GM12878 (cell line): ENCODE measurements at regions of chr7 and their contacts with region 1.

Region 1: DNA sequence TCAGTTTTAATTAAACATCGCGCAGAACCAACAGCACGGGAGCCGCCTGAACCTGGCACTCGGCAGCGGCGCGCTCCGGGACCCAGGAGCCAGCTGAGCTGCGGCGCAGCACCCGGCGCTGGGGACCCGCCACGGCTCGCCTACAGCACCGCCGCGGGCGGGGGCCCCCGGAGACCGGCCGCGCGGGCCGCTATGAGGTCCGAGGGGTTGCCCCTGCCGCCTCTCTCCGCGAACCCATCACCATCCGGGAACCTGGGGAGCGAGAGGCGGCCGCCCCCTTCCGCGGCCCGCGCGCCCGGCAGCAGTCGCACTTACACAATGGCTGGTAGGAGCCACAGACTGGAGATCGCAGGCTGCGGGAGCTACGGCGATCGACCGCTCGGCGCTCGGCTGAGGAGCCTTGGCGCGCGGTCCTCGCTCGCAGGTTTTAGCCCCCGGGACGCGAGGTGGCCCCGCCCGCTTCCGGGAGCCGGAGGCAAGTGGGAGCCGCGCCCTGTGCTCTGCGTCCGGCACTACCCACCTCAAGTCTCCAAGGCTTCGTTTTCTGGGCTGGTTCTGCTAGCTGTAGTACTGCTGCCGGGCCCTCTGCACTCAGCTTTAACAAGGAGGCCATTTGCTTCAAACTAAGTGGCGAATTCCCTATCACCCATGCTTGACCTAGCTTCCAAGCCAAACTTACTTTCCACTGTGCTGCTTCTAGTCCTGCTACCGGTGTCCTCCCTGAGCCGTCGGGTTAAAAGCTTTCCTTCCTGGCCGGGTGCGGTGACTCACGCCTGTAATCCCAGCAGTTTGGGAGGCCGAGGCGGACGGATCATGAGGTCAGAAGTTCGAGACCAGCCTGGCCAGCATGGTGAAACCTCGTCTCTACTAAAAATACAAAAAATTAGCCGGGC is at the start of gene TPK1:
- DNase-seq: peak; percentile 74
- ATAC-seq: peak; percentile 88
- H3K4me3 ChIP-seq: peak within 1 kb of the TSS; percentile 94
- H3K27ac ChIP-seq: peak within 1 kb of the TSS; percentile 86
- H3K4me1 ChIP-seq: no peaks in the 10 kb centered on the region; the same call in 1 of the 2 replicates
- H3K27me3 ChIP-seq: no peaks in the 10 kb centered on the region
- CTCF ChIP-seq: no peak
- EP300 ChIP-seq: 0 out of 4 replicates have a peak, but pooled peaks of 1 of the 2 experiments have one; percentile 23
- POLR2A ChIP-seq: peak; percentile 93
- RAD21 ChIP-seq: no peak
- polyA plus RNA-seq, gene TPK1: 8.0 to 11.3 TPM

Region 2: DNA sequence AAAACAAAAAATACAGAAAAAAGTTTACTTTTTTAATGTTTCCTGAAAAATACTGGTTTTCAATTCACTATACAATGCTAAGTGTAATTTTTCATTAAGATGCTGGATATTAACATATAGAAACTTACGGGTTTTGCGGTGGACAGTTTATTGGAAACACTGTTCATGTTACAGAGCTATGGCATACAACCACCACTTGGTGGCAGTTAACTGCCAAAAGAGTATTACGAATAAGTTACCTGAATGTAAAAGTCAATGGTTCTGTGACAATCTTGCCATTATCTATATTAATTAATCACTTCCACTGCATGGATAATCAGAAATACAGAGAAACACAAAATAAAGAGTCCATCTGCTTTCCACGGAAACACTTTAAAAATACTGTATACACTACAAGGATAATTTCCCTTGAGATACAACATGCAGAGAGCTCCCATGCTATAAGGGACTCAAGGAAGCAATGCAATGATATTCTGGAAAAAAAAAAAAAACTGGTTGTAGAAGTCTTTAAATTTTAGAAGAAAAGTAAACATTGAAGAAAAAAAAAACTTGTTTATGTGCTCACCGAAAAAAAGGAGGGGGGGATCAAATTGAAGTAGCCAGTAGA is 97.1 kb before region 1 on chr7:
- CTCF ChIA-PET with region 1: interaction called, 20 read pairs
- POLR2A ChIA-PET with region 1: interaction called, 6 read pairs
- RAD21 ChIA-PET with region 1: interaction called, 3 read pairs
- SMC1A ChIA-PET with region 1: interaction called, 5 read pairs
- in situ Hi-C with region 1: no loop called
- intact Hi-C with region 1: loop called (anchors 5 kb)
- DNase-seq: no peak
- ATAC-seq: peak; percentile 91
- H3K4me3 ChIP-seq: no peak overlapping the region
- H3K27ac ChIP-seq: no peak overlapping the region
- H3K4me1 ChIP-seq: no peaks in the 10 kb centered on the region
- H3K27me3 ChIP-seq: no peaks in the 10 kb centered on the region
- CTCF ChIP-seq: peak; percentile 66 to 71 (median 70)
- EP300 ChIP-seq: no peak
- POLR2A ChIP-seq: no peak
- RAD21 ChIP-seq: peak; percentile 66

Region 3: GRCh38 chr7:144786522-144786921 is 49.4 kb before region 1 on chr7:
- CTCF ChIA-PET with region 1: interaction called, 18 read pairs
- POLR2A ChIA-PET with region 1: no interaction called
- RAD21 ChIA-PET with region 1: interaction called, 14 read pairs
- SMC1A ChIA-PET with region 1: interaction called, 4 read pairs
- in situ Hi-C with region 1: no loop called
- intact Hi-C with region 1: no loop called
- DNase-seq: no peak
- ATAC-seq: peak; percentile 79
- H3K4me3 ChIP-seq: no peak overlapping the region
- H3K27ac ChIP-seq: no peak overlapping the region
- H3K4me1 ChIP-seq: no peaks in the 10 kb centered on the region
- H3K27me3 ChIP-seq: no peaks in the 10 kb centered on the region
- CTCF ChIP-seq: peak; percentile 28 to 42 (median 39); a peak in 5 of 6 replicates
- EP300 ChIP-seq: no peak
- POLR2A ChIP-seq: no peak
- RAD21 ChIP-seq: peak; percentile 49

Region 4: DNA sequence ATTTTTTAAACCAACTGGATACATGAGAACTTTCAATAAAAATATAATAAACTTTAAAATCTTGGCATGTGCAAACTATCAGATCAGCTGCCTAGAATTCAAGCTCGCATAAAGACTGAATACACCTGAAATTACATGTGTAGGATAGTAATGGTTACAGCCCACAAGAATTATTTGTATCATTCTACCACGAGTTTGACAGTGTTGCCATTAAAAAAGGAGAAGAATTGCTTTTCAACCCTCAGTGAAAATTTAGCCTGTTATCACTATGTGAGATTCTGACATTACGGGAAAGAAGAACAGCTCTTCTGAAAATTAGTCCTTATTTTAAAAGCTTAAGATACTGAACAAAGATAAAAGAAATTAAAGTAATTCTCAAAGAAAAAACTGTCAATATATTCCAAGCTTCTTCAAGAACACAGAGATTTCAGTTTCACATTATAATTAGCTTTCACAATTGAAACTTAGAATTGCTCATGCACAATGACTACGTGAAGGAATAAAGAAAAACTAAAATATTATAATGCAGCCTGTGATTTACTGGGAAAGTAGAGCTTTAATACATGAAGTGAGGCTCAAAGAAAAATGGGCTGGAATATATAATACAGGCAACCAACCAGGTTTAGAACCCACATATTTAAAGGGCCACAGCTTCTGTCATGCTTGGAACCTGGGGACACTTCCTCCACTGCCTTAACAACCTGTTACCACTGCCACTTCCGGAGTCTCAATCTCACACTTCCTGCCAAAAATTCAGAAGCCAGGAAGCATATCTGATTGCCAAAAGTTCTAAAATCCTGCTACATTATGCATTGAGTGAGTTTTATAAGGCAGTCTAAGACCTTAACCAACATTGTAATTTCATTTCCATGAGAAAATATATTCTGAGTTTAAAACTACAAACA is 23.3 kb before region 1 on chr7:
- CTCF ChIA-PET with region 1: interaction called, 8 read pairs
- POLR2A ChIA-PET with region 1: interaction called, 16 read pairs
- RAD21 ChIA-PET with region 1: interaction called, 14 read pairs
- SMC1A ChIA-PET with region 1: interaction called, 9 read pairs
- in situ Hi-C with region 1: no loop called
- intact Hi-C with region 1: no loop called
- DNase-seq: no peak
- ATAC-seq: peak; percentile 95
- H3K4me3 ChIP-seq: 0 out of 2 replicates have a peak overlapping the region, but pooled peaks have one; percentile 31
- H3K27ac ChIP-seq: peak overlapping the region; percentile 27; the same call in 1 of the 2 replicates
- H3K4me1 ChIP-seq: no peaks in the 10 kb centered on the region; the same call in 1 of the 2 replicates
- H3K27me3 ChIP-seq: no peaks in the 10 kb centered on the region
- CTCF ChIP-seq: no peak
- EP300 ChIP-seq: no peak
- POLR2A ChIP-seq: no peak
- RAD21 ChIP-seq: no peak

Region 5: GRCh38 chr7:144818511-144818910 is 17.4 kb before region 1 on chr7:
- CTCF ChIA-PET with region 1: interaction called, 17 read pairs
- POLR2A ChIA-PET with region 1: interaction called, 22 read pairs
- RAD21 ChIA-PET with region 1: interaction called, 39 read pairs
- SMC1A ChIA-PET with region 1: interaction called, 45 read pairs
- in situ Hi-C with region 1: no loop called
- intact Hi-C with region 1: no loop called
- DNase-seq: no peak
- ATAC-seq: peak; percentile 69
- H3K4me3 ChIP-seq: no peak overlapping the region
- H3K27ac ChIP-seq: no peak overlapping the region
- H3K4me1 ChIP-seq: peaks cover 33% of the 10 kb centered on the region
- H3K27me3 ChIP-seq: no peaks in the 10 kb centered on the region
- CTCF ChIP-seq: no peak
- EP300 ChIP-seq: no peak
- POLR2A ChIP-seq: no peak
- RAD21 ChIP-seq: no peak